ENCODE measurements at regions of chr19 and their contacts with region 1.

Region 1: GRCh38 chr19:11587302-11587974 is 9.8 kb upstream of the ZNF627 start:
- DNase-seq: peak; percentile 89
- ATAC-seq: peak; percentile 96
- H3K4me3 Mint-ChIP-seq: no peak overlapping the region
- H3K27ac Mint-ChIP-seq: no peak overlapping the region
- H3K4me1 Mint-ChIP-seq: peaks cover 3% of the 10 kb centered on the region
- H3K27me3 Mint-ChIP-seq: no peaks in the 10 kb centered on the region

Region 2: GRCh38 chr19:11293433-11294389 is 293.7 kb before region 1 on chr19:
- CTCF ChIA-PET with region 1: no interaction called
- POLR2A ChIA-PET with region 1: no interaction called
- intact Hi-C with region 1: loop called in 1 of 2 experiments (anchors 1 kb)
- DNase-seq: peak; percentile 89
- ATAC-seq: peak; percentile 99
- H3K4me3 Mint-ChIP-seq: peak overlapping the region; percentile 38
- H3K27ac Mint-ChIP-seq: no peak overlapping the region
- H3K4me1 Mint-ChIP-seq: peaks cover 2% of the 10 kb centered on the region
- H3K27me3 Mint-ChIP-seq: peaks cover 27% of the 10 kb centered on the region

Region 3: DNA sequence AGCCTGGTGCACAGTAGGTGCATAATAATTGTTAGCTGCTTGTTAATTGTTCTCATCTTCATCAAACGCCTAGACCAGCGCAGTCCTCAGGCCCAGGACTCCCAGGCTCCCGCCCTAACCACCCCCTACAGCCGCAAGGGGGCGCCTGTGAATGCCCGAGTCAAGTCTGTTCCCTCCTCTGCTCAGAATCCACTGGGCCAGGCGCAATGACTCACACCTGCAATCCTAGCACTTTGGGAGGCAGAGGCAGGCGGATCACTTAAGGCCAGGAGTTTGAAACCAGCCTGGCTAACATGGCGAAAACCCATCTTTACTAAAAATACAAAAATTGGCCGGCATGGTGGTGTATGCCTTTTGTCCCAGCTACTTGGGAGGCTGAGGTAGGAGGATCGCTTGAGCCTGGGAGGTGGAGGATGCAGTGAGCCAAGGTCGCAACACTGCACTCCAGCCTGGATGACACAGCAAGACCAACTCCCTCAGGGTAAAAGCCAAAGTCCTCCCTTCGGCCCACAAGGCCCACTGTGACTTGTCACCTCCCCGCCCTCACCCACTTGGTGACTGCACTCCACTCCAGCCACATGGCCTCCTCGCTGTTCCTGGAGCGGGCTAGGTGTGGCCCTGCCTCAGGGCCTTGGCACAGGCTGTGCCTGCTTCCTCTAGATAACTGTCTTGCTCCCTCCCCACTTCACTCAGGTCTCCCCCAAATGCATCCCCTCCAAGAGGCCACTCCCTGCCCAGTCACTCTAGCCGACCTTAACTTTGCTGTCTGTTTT is 90.9 kb before region 1 on chr19:
- CTCF ChIA-PET with region 1: interaction called, 4 read pairs
- POLR2A ChIA-PET with region 1: no interaction called
- intact Hi-C with region 1: loop called (anchors 1 kb)
- DNase-seq: peak; percentile 83
- ATAC-seq: peak; percentile 94
- H3K4me3 Mint-ChIP-seq: no peak overlapping the region
- H3K27ac Mint-ChIP-seq: no peak overlapping the region
- H3K4me1 Mint-ChIP-seq: no peaks in the 10 kb centered on the region
- H3K27me3 Mint-ChIP-seq: no peaks in the 10 kb centered on the region

Region 4: GRCh38 chr19:11528551-11529341 is 58.7 kb before region 1 on chr19 and contains the start of gene ECSIT:
- CTCF ChIA-PET with region 1: no interaction called
- POLR2A ChIA-PET with region 1: no interaction called
- intact Hi-C with region 1: loop called (anchors 2 to 5 kb)
- DNase-seq: peak; percentile 97
- ATAC-seq: peak; percentile 97
- H3K4me3 Mint-ChIP-seq: peak within 1 kb of the TSS; percentile 99
- H3K27ac Mint-ChIP-seq: peak within 1 kb of the TSS; percentile 96
- H3K4me1 Mint-ChIP-seq: peaks cover 28% of the 10 kb centered on the region
- H3K27me3 Mint-ChIP-seq: no peaks in the 10 kb centered on the region
- total RNA-seq, gene ECSIT: 37.2 to 44.6 TPM

Region 5: DNA sequence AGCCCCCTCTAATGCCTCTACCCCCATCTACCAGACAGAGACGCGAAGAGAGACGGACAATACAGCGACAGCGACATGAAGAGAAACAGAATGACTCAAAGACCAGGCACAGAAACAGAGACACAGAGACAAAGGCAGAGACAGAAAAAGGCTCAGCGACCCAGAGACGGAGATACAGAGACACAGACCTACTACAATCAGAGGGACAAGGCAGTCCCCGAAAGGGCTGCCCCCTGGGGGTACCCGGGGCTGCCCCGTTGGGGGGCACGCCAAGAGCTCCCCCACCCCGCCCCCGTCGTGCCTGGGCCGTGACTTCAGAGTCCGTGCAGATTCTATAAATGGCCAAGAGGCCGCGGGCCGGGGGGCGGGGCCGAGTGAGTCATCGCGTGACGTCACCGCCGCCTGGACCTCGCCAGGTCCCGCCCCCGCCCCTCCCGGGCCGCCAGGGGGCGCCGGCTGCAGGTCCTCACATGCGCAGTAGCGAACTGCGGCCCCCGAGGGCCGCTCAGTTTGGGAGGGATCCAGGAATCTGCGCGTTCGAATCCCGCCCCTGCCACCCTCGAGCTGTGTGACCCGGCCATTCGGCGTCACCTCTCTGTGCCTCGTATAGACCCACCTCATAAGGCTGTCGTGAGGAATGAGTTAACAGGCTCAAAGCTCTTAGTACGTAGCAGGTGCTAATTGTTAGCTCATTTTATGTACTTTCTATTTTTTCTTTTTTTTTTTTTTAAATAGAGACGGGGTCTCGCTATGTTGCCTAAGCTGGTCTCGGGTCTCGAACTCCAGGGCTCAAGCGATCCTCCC is 51.4 kb before region 1 on chr19:
- CTCF ChIA-PET with region 1: interaction called, 4 read pairs
- POLR2A ChIA-PET with region 1: no interaction called
- intact Hi-C with region 1: loop called (anchors 1 to 5 kb)
- DNase-seq: peak; percentile 94
- ATAC-seq: peak; percentile 76
- H3K4me3 Mint-ChIP-seq: peak overlapping the region; percentile 2
- H3K27ac Mint-ChIP-seq: peak overlapping the region; percentile 51
- H3K4me1 Mint-ChIP-seq: peaks cover 17% of the 10 kb centered on the region
- H3K27me3 Mint-ChIP-seq: peaks cover 14% of the 10 kb centered on the region

Region 6: GRCh38 chr19:11861301-11861700 is 273.9 kb after region 1 on chr19:
- CTCF ChIA-PET with region 1: no interaction called
- POLR2A ChIA-PET with region 1: no interaction called
- intact Hi-C with region 1: no loop called
- DNase-seq: no peak
- ATAC-seq: no peak
- H3K4me3 Mint-ChIP-seq: no peak overlapping the region
- H3K27ac Mint-ChIP-seq: no peak overlapping the region
- H3K4me1 Mint-ChIP-seq: no peaks in the 10 kb centered on the region
- H3K27me3 Mint-ChIP-seq: no peaks in the 10 kb centered on the region

Region 7: DNA sequence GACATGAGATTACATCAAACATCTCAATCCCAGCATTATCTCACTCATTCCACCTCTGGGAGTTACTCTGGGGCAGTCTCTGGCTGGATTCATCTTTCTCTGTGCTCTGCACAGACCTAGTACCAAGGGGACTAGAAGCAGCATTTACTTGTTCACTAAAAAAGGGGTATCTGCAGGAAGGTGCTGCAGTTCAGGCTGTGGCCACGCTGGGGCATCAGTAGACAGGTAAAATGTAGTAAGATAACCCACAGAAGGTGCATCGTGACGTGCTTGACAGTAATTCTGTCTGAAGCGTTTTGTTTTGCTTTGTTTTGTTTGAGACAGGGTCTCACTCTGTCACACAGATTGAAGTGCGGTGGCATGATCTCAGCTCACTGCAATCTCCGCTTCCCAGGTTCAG is 934.6 kb after region 1 on chr19:
- CTCF ChIA-PET with region 1: no interaction called
- POLR2A ChIA-PET with region 1: no interaction called
- intact Hi-C with region 1: no loop called
- DNase-seq: peak; percentile 51
- ATAC-seq: no peak
- H3K4me3 Mint-ChIP-seq: no peak overlapping the region
- H3K27ac Mint-ChIP-seq: no peak overlapping the region
- H3K4me1 Mint-ChIP-seq: no peaks in the 10 kb centered on the region
- H3K27me3 Mint-ChIP-seq: no peaks in the 10 kb centered on the region